ENCODE measurements at regions of chr12 and their contacts with region 1.

Region 1: DNA sequence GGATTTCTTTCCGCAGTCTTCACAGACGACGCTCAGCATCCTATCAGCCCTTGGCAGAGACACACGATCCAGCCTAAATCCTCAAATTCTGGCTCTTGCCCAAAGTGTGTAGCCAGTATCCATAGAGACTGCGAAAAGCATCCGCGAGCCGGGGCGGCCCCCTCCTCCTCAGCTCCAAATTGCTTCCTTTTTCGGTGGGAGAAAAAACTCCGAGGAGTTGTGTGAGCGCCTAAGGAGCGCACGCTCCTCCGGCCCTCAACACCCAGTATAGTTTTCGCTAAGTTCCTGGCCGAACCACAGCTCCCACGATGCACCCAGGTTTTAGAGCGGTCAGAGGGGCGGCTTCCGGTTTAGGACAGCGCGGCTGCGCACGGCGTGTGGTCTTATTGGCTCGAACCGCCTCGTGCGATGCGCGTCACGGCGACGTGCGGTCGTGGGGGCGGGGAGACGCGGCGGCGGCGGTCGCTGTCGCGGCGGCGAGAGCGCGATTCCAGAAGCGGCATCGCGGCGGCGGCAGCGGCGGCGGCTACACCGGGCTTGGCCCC is at the start of gene ADIPOR2:
- DNase-seq: peak; percentile 94 to 98
- ATAC-seq: peak; percentile 99 to 100 (median 99)
- H3K4me3 ChIP-seq: peak within 1 kb of the TSS; percentile 99
- H3K27ac ChIP-seq: peak within 1 kb of the TSS; percentile 97
- H3K4me1 ChIP-seq: peaks cover 30% of the 10 kb centered on the region
- H3K27me3 ChIP-seq: no peaks in the 10 kb centered on the region
- CTCF ChIP-seq: no peak
- total RNA-seq, gene ADIPOR2: 36.7 to 49.4 (median 43.2) TPM

Region 2: GRCh38 chr12:1740161-1740948 is 49.7 kb after region 1 on chr12:
- intact Hi-C with region 1: loop called in 1 of 2 experiments (anchors 5 kb)
- DNase-seq: no peak
- ATAC-seq: peak; percentile 77 to 93 (median 91)
- H3K4me3 ChIP-seq: no peak overlapping the region
- H3K27ac ChIP-seq: peak overlapping the region; percentile 63
- H3K4me1 ChIP-seq: peaks cover 49% of the 10 kb centered on the region
- H3K27me3 ChIP-seq: no peaks in the 10 kb centered on the region
- CTCF ChIP-seq: no peak

Region 3: DNA sequence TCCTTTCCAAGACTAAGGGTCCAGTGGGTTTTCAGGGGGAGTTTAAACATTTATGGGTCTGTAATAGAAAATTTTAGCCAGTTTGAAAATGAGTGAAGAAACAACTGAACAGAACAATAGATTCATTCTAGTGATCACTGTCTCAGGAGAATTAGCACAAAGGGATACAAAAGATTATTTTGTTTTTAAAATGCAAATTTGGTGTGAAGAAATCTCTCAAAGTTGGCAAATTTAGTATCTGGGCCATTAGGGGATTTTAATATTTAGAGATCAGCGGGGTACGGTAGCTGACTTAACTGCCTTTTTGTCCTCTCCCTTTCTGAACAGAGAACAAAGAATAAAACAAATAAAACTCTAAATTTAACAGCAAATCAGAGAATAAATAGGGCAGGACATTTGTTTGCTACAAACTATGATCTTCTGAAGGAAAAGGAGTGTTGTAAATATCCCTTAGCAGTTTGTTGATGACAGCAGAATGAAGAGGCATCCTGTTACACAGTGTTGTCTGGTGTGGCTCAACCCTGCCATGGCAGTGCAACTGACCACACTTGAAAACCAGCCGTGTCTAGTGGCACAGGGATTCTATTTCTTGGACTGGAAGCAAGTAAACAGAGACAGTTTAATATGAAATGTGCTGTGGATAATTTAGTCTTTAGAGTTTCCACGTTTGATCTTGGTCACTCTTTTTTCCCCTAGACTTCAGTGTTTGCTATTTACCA is 83.4 kb after region 1 on chr12:
- intact Hi-C with region 1: loop called in 1 of 2 experiments (anchors 2 kb)
- DNase-seq: peak in 1 of 2 donors; percentile 67
- ATAC-seq: peak; percentile 94 to 96 (median 95)
- H3K4me3 ChIP-seq: peak overlapping the region; percentile 45
- H3K27ac ChIP-seq: peak overlapping the region; percentile 81
- H3K4me1 ChIP-seq: peaks cover 41% of the 10 kb centered on the region
- H3K27me3 ChIP-seq: no peaks in the 10 kb centered on the region
- CTCF ChIP-seq: no peak

Measured in psoas muscle (tissue), 8 donors.